ENCODE measurements at regions of chr2 and their contacts with region 1.

Region 1: GRCh38 chr2:118032169-118033013 is 18.5 kb upstream of the CCDC93 start:
- DNase-seq: peak; percentile 38
- ATAC-seq: peak; percentile 74
- H3K4me3 Mint-ChIP-seq: no peak overlapping the region
- H3K27ac Mint-ChIP-seq: no peak overlapping the region
- H3K4me1 Mint-ChIP-seq: peaks cover 9% of the 10 kb centered on the region
- H3K27me3 Mint-ChIP-seq: peaks cover 21% of the 10 kb centered on the region
- CTCF ChIP-seq: peak; percentile 77

Region 2: DNA sequence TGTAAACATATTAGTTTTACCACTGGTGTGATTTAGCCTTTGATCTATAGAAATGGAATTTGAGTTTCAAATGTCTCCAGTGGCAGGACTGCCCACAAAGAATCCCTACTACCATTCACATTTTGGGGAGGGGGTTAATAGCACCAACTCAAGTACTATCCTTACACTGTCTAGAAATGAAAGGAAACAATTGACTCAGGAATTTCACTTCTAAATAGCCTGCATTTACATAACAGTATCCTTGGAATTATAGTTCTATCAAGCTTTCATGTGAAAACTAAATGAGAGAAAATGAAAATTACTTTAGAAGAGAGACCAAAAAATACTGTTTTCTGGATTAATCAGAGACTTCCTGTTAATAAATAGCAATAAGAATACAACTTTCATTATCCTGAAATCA is 11.0 kb before region 1 on chr2:
- CTCF ChIA-PET with region 1: interaction called, 18 read pairs
- POLR2A ChIA-PET with region 1: no interaction called
- DNase-seq: no peak
- ATAC-seq: no peak
- H3K4me3 Mint-ChIP-seq: no peak overlapping the region
- H3K27ac Mint-ChIP-seq: no peak overlapping the region
- H3K4me1 Mint-ChIP-seq: peaks cover 19% of the 10 kb centered on the region
- H3K27me3 Mint-ChIP-seq: peaks cover 55% of the 10 kb centered on the region
- CTCF ChIP-seq: no peak

Region 3: DNA sequence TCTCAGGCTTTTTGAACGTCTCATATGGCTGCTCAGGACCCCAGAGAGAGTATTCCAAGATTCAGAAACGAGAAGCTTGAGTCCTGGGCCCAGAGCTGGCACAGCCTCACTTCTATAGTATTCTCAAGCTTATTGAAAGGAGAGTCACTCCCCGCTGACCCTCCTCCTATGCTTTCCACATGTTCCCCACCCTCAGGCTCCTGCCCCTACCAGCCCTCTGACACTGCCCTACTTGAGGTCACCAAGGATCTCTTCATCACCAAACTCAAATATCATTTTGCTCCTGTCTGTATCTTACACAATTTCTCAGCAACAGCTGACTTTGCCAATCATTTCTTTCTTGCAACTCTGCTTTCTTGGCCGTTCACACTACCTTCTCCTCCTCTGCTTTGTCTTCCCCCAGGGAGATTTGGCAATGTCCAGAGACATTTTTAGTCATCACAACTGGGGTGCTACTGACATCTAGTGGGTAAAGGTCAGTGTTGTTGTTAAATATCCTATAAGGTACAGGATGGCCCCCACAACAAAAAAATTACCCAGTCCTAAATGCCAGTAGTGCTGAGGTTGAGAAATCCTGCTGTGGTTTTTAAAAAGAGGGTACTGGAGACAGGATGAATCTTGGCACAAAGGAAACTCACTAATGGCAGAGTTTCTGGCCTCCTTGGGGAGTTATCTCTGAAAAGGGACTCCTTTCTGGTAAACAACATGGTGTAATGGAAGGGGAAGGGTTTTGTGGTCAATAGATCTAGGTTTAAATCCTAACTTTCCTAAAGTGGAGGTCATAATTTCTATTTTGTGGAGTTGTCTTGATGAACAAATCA is 29.0 kb after region 1 on chr2:
- CTCF ChIA-PET with region 1: interaction called, 15 read pairs
- POLR2A ChIA-PET with region 1: no interaction called
- DNase-seq: no peak
- ATAC-seq: peak; percentile 90
- H3K4me3 Mint-ChIP-seq: no peak overlapping the region
- H3K27ac Mint-ChIP-seq: no peak overlapping the region
- H3K4me1 Mint-ChIP-seq: peaks cover 2% of the 10 kb centered on the region; the same call in 1 of the 2 replicates
- H3K27me3 Mint-ChIP-seq: no peaks in the 10 kb centered on the region; the same call in 1 of the 2 replicates
- CTCF ChIP-seq: no peak

Region 4: GRCh38 chr2:118291251-118291880 is 259.0 kb after region 1 on chr2:
- CTCF ChIA-PET with region 1: no interaction called
- POLR2A ChIA-PET with region 1: no interaction called
- DNase-seq: no peak
- ATAC-seq: no peak
- H3K4me3 Mint-ChIP-seq: no peak overlapping the region
- H3K27ac Mint-ChIP-seq: no peak overlapping the region
- H3K4me1 Mint-ChIP-seq: no peaks in the 10 kb centered on the region
- H3K27me3 Mint-ChIP-seq: no peaks in the 10 kb centered on the region; the same call in 1 of the 2 replicates
- CTCF ChIP-seq: no peak